Body of pancreas (tissue), 4 donors: ENCODE measurements at regions of chr4 and their contacts with region 1.

Region 1: DNA sequence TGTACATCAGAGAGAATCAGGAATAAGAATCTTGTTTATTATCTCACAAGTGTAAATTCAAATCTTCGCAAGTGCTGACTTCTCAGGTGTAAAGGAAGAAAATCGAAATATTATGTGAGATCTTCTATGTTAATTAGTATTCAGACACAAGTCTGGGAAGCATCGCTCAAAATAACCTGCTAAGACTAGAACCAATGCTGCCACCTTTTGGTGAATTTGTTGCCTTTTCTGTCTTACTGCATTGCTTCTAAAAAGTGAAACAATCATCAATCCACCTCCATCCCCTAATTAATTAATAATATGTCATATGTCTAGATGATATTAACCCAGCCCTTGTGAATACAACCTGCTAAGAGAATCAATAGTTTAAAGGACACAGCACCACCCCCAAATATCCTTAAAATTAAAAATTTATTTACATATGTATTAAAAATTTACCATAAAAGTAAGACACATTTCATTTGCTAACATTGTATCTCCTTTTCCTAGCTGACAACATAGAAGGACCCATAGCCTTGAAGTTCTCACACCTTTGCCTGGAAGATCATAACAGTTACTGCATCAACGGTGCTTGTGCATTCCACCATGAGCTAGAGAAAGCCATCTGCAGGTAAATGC is 3.5 kb downstream of the EPGN start:
- DNase-seq: peak; percentile 24 to 64 (median 32)
- ATAC-seq: no peak
- H3K4me3 ChIP-seq: no peak overlapping the region
- H3K27ac ChIP-seq: no peak overlapping the region
- H3K4me1 ChIP-seq: no peaks in the 10 kb centered on the region
- H3K27me3 ChIP-seq: no peaks in the 10 kb centered on the region
- CTCF ChIP-seq: peak; percentile 32 to 71 (median 63)
- POLR2A ChIP-seq: no peak

Region 2: DNA sequence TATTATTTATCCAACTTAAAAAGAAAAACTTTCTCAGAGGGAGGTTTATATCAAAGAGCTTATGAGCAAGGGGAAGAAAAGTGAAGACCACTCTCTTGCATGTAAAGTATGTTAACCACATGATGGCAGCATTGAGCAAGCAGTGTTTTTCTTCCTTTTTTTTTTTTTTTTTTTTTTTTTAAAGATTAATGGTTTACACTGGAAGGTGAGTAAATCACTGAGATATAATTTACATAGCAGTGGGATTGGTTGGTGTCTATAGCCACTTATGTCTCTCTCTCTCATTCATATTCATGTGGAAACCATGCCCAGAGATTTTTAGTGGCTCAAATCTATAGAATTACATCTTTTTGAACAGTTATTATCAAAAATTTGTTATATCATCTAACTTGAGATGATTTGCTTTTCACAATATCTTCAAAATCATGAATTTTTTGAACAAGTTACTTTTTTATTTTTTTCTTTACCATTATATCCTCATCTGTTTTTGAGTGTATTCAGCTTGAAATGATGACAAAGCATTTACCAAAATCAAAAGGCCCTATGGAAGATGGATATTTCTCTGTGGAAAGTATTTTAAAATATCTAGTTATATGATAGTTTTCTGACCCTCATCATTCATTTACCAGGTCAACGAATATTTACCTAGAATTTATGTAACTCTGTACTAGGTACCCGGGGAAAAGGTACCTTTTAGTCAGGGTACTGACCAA is 122.3 kb before region 1 on chr4:
- intact Hi-C with region 1: loop called (anchors 5 kb)
- DNase-seq: peak in 2 of 4 donors; percentile 16 to 27
- ATAC-seq: peak; percentile 53
- H3K4me3 ChIP-seq: no peak overlapping the region
- H3K27ac ChIP-seq: no peak overlapping the region
- H3K4me1 ChIP-seq: no peaks in the 10 kb centered on the region
- H3K27me3 ChIP-seq: no peaks in the 10 kb centered on the region
- CTCF ChIP-seq: peak in 6 of 7 experiments; percentile 51 to 71 (median 62)
- POLR2A ChIP-seq: no peak

Region 3: GRCh38 chr4:74370912-74371311 is 59.1 kb after region 1 on chr4:
- intact Hi-C with region 1: no loop called
- DNase-seq: peak in 3 of 4 donors; percentile 15 to 34 (median 15)
- ATAC-seq: peak; percentile 50
- H3K4me3 ChIP-seq: no peak overlapping the region
- H3K27ac ChIP-seq: no peak overlapping the region
- H3K4me1 ChIP-seq: peaks cover under 1% of the 10 kb centered on the region
- H3K27me3 ChIP-seq: no peaks in the 10 kb centered on the region
- CTCF ChIP-seq: peak in 6 of 7 experiments; percentile 18 to 47 (median 38)
- POLR2A ChIP-seq: no peak